Activated CD4-positive, alpha-beta memory T cell treated with anti-CD3 and anti-CD28 coated beads, Interleukin-2, amount 10 ng/mL, durations not matched to agents 7 days and 5 days (primary cell): ENCODE measurements at regions of chr13 and their contacts with region 1.

Region 1: GRCh38 chr13:99322297-99323103 is 15.3 kb upstream of the GPR183 start:
- DNase-seq: peak; percentile 44
- H3K4me3 Mint-ChIP-seq: peak overlapping the region; percentile 40
- H3K27ac Mint-ChIP-seq: peak overlapping the region; percentile 97
- H3K4me1 Mint-ChIP-seq: peaks cover 74% of the 10 kb centered on the region
- H3K27me3 Mint-ChIP-seq: no peaks in the 10 kb centered on the region

Region 2: GRCh38 chr13:99296398-99296797 is 26.1 kb before region 1 on chr13:
- CTCF ChIA-PET with region 1: no interaction called
- POLR2A ChIA-PET with region 1: interaction called, 125 read pairs
- DNase-seq: no peak
- H3K4me3 Mint-ChIP-seq: peak overlapping the region; percentile 71
- H3K27ac Mint-ChIP-seq: peak overlapping the region; percentile 94
- H3K4me1 Mint-ChIP-seq: peaks cover 78% of the 10 kb centered on the region
- H3K27me3 Mint-ChIP-seq: no peaks in the 10 kb centered on the region

Region 3: DNA sequence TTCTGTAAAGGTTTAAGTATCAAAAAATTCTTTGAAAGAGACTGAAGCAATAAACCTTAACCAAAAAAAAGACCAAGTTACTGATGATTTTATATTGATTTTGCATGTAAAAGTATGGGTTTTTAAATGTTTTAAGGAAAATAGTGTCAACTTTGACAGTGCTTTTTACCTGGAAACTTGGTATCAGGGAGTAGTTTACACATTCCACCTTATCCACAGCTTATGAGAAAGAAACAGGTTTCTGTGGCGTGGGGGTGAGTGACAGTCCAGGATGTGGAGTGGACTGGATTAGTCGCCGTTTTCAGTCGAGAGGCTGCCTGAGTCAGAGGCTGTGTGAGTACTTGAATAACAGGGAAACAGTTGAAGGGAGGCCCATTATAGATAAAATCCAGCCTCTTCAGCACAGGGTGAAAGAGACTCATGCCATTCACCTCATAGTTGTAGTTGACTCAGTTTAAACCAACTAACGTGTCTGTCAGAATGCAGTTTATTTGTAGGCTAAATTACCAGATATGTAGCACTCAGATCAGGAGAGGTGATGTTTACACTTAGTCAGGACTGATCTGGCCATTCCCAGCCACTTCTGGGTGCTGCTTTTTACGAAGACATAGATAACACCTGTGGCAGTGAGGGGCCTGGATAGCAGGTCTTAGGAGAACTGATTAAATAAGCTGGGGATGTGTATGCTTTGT is 14.7 kb before region 1 on chr13:
- CTCF ChIA-PET with region 1: interaction called, 18 read pairs
- POLR2A ChIA-PET with region 1: interaction called, 125 read pairs
- DNase-seq: peak; percentile 78
- H3K4me3 Mint-ChIP-seq: peak overlapping the region; percentile 79
- H3K27ac Mint-ChIP-seq: peak overlapping the region; percentile 83
- H3K4me1 Mint-ChIP-seq: peaks cover 82% of the 10 kb centered on the region
- H3K27me3 Mint-ChIP-seq: no peaks in the 10 kb centered on the region

Region 4: GRCh38 chr13:99347911-99348451 is 25.5 kb after region 1 on chr13:
- CTCF ChIA-PET with region 1: interaction called, 11 read pairs
- POLR2A ChIA-PET with region 1: interaction called, 118 read pairs
- DNase-seq: no peak
- H3K4me3 Mint-ChIP-seq: no peak overlapping the region
- H3K27ac Mint-ChIP-seq: no peak overlapping the region
- H3K4me1 Mint-ChIP-seq: peaks cover 47% of the 10 kb centered on the region
- H3K27me3 Mint-ChIP-seq: no peaks in the 10 kb centered on the region

Region 5: DNA sequence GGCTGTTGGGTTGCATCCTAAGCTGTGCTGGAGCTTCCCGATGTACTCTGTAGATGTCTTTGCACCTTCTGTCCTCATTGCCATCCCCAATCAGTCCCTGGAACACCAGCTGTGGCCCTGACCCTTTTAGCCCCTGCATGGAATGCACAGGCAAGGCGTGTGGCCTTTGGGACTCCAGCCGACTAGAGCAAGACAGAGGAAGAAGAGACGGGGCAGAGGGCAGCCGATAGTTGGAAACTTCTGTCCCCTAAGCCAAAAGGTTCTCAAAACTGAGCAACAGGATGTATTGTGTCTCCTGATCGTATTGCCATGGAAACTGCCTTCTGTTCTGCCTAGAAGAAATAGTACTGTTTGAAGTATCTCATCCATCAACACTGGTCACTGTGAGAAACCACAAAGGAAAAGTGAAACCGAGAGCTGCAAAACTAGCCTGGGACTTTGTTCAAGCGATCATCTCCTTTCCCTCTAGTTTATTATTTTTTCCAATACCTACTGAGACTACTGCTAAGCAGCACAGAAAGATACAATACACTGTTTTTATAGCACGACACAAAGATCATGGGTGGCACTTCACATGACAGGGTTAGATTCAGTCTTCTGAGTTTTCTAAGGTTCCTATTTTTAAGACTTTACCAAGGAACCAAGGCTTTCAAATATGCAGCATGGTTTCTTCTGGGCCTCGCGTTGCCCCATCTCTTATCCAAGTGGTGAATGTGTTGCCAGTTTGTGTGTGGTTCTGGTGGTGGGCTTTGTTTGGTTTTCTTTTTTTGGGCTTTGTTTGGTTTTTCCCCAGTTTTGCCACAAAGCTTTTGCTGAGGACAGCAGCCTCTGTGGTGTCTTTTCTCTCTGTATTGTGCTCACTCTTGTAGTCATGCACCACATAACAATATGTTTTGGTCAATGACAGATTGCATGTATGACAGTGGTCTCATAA is 33.9 kb after region 1 on chr13:
- CTCF ChIA-PET with region 1: interaction called, 11 read pairs
- POLR2A ChIA-PET with region 1: interaction called, 118 read pairs
- DNase-seq: peak; percentile 67
- H3K4me3 Mint-ChIP-seq: peak overlapping the region; percentile 56
- H3K27ac Mint-ChIP-seq: peak overlapping the region; percentile 96
- H3K4me1 Mint-ChIP-seq: peaks cover 99% of the 10 kb centered on the region
- H3K27me3 Mint-ChIP-seq: no peaks in the 10 kb centered on the region

Region 6: DNA sequence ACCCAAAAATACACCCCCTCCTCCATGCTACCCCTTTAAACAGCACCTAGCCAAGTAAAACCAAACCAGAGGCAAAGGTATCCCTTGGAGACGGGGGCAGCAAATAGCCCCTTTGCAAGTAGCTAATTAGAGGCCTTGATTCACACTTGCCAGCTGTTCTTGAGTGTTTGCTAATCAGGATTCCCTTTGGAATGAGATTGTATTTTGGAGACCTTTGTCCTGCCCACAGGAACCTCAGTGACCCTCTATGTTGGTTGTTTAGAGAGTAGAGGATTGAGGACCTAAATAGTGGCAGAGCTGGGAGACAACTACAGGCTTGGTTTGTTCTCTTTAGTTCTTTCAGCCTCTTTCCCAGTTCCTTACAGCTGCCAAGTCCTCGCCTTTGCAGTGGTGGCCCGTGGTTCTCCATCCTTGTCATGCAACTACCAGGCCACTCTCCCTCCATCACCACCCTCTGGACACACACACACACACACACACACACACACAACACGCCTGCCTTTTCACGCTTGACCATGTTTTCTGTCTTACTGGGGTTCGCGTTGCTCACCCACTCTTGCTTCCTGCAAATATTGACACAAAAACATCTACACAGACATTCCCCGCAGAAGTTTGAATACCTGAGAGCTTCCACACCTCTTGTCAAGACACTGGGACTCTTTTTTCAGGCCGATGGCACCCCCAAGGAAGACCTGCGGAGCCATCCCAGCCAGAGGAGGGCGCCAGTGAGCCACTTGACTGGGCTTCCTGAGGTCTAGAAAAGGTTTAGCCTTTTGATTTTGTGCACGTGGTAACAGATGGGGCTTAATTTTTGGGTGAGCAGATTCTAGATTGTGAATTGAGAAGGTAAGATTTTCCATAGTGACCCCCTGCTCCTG is 64.7 kb after region 1 on chr13:
- CTCF ChIA-PET with region 1: interaction called, 11 read pairs
- POLR2A ChIA-PET with region 1: interaction called, 13 read pairs
- DNase-seq: peak; percentile 81
- H3K4me3 Mint-ChIP-seq: no peak overlapping the region
- H3K27ac Mint-ChIP-seq: no peak overlapping the region
- H3K4me1 Mint-ChIP-seq: peaks cover 52% of the 10 kb centered on the region
- H3K27me3 Mint-ChIP-seq: no peaks in the 10 kb centered on the region

Region 7: GRCh38 chr13:99617474-99618255 is 295.2 kb after region 1 on chr13:
- CTCF ChIA-PET with region 1: no interaction called
- POLR2A ChIA-PET with region 1: no interaction called
- DNase-seq: peak; percentile 40
- H3K4me3 Mint-ChIP-seq: no peak overlapping the region
- H3K27ac Mint-ChIP-seq: no peak overlapping the region
- H3K4me1 Mint-ChIP-seq: peaks cover 7% of the 10 kb centered on the region
- H3K27me3 Mint-ChIP-seq: no peaks in the 10 kb centered on the region